Caco-2 (cell line): ENCODE measurements at regions of chr12 and their contacts with region 1.

Region 1: GRCh38 chr12:127677537-127678131 is 589.3 kb upstream of the TMEM132C start:
- DNase-seq: peak; percentile 65 to 67
- H3K4me3 ChIP-seq: no peak overlapping the region
- H3K4me3 Mint-ChIP-seq: no peak overlapping the region
- H3K27ac Mint-ChIP-seq: no peak overlapping the region
- H3K4me1 ChIP-seq: no peaks in the 10 kb centered on the region
- H3K4me1 Mint-ChIP-seq: no peaks in the 10 kb centered on the region
- H3K27me3 ChIP-seq: no peaks in the 10 kb centered on the region
- H3K27me3 Mint-ChIP-seq: no peaks in the 10 kb centered on the region
- CTCF ChIP-seq: peak; percentile 53 to 70

Region 2: DNA sequence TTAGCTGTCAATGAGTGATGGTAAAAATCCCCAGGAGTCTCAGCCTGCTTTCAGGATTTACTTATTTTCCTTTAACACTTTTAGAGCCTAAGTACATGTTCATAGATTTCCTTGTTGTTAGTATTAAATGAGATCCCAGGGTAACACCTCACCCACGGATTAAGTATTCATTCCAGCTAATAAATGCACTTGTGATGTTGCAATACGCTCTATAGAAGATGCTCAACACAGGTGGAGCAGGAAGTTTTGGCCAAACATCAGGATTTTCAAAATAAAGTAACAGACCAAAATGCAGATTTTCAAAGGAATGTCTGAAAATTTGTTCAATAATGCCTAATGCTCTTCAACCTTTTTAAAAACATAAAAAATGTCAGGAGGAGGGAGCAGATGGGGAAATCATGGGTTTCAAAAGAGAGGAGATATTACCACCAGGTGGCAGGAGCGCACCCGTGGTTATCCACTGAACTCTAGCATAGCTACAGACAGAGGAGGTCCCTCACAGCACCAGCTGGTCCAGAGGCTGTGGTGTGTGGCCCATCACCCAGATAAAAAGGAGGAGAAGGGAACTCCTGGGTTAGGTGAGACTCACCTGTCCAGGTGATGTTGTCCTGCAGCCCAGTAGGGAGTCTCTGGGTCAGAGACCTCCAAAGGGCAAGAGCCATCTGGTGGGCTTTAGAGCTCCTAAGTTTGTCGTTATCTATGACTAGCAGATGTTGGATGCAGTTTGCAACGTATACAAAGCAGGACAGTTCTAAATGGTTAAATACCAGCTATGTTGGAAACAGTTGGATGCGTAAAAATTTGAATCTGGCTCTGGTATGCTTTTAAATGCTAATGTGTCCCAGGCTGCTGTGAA is 569.0 kb before region 1 on chr12:
- CTCF ChIA-PET with region 1: interaction called, 13 read pairs
- POLR2A ChIA-PET with region 1: no interaction called
- intact Hi-C with region 1: loop called (anchors 5 kb)
- DNase-seq: peak; percentile 56 to 65
- H3K4me3 ChIP-seq: no peak overlapping the region
- H3K4me3 Mint-ChIP-seq: no peak overlapping the region
- H3K27ac Mint-ChIP-seq: no peak overlapping the region
- H3K4me1 ChIP-seq: no peaks in the 10 kb centered on the region
- H3K4me1 Mint-ChIP-seq: no peaks in the 10 kb centered on the region
- H3K27me3 ChIP-seq: no peaks in the 10 kb centered on the region
- H3K27me3 Mint-ChIP-seq: no peaks in the 10 kb centered on the region
- CTCF ChIP-seq: peak; percentile 44 to 48

Region 3: DNA sequence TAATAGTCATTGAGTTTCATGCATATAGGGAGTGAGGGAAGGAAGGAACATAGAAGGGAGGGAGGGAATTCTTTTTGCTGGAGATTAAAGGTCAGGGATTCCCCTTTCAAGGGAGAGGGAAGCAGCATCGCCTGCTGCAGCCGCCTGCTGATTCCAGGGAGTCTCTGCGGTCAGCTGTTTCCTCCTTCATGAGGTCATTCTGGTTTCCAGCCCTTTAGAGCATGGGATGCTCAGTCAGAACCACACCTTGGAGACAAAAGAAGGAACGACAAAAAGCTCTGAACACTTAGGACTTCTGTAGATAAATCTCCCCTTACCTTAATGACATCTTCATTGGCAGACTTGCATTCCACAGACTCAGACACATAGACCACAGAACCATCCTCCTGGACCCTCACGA is 333.7 kb before region 1 on chr12:
- CTCF ChIA-PET with region 1: no interaction called
- POLR2A ChIA-PET with region 1: no interaction called
- intact Hi-C with region 1: no loop called
- DNase-seq: no peak
- H3K4me3 ChIP-seq: no peak overlapping the region
- H3K4me3 Mint-ChIP-seq: no peak overlapping the region
- H3K27ac Mint-ChIP-seq: no peak overlapping the region
- H3K4me1 ChIP-seq: no peaks in the 10 kb centered on the region
- H3K4me1 Mint-ChIP-seq: no peaks in the 10 kb centered on the region
- H3K27me3 ChIP-seq: no peaks in the 10 kb centered on the region
- H3K27me3 Mint-ChIP-seq: no peaks in the 10 kb centered on the region
- CTCF ChIP-seq: no peak

Region 4: GRCh38 chr12:127381048-127381668 is 296.5 kb before region 1 on chr12:
- CTCF ChIA-PET with region 1: interaction called, 4 read pairs
- POLR2A ChIA-PET with region 1: no interaction called
- intact Hi-C with region 1: loop called (anchors 5 kb)
- DNase-seq: peak; percentile 51 to 75
- H3K4me3 ChIP-seq: no peak overlapping the region
- H3K4me3 Mint-ChIP-seq: peak overlapping the region; percentile 33
- H3K27ac Mint-ChIP-seq: no peak overlapping the region
- H3K4me1 ChIP-seq: no peaks in the 10 kb centered on the region
- H3K4me1 Mint-ChIP-seq: no peaks in the 10 kb centered on the region
- H3K27me3 ChIP-seq: no peaks in the 10 kb centered on the region
- H3K27me3 Mint-ChIP-seq: no peaks in the 10 kb centered on the region
- CTCF ChIP-seq: peak; percentile 55 to 82

Region 5: DNA sequence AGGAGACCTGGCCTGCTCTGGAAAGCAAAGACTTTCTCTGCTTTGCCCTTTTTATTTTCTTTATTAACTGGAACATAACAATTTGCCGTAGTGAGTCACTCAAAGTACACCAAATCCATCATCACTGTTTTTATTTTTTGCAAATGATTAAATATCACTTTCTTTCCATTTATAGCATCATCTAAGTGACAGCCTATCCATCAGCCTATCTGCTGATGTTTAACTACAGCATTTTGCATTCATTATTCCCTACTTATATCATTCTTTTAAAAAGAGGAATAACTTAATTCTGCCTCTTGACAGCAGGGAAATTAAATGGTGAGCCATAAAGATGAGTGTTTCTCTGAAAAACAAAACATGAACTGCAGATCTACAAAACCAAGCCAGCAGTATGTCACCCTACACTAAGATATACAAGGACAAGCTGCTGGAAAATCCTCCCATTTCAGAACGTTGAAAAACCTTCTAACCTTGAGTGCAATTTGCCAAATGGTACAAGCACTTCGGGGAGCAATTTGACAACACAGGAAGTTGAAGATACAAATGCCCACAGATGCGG is 232.0 kb before region 1 on chr12:
- CTCF ChIA-PET with region 1: no interaction called
- POLR2A ChIA-PET with region 1: no interaction called
- intact Hi-C with region 1: loop called (anchors 10 kb)
- DNase-seq: no peak
- H3K4me3 ChIP-seq: no peak overlapping the region
- H3K4me3 Mint-ChIP-seq: no peak overlapping the region
- H3K27ac Mint-ChIP-seq: no peak overlapping the region
- H3K4me1 ChIP-seq: no peaks in the 10 kb centered on the region
- H3K4me1 Mint-ChIP-seq: no peaks in the 10 kb centered on the region
- H3K27me3 ChIP-seq: no peaks in the 10 kb centered on the region
- H3K27me3 Mint-ChIP-seq: no peaks in the 10 kb centered on the region
- CTCF ChIP-seq: no peak

Region 6: GRCh38 chr12:127489061-127489460 is 188.6 kb before region 1 on chr12:
- CTCF ChIA-PET with region 1: no interaction called
- POLR2A ChIA-PET with region 1: no interaction called
- intact Hi-C with region 1: loop called (anchors 1 kb)
- DNase-seq: peak; percentile 60 to 70
- H3K4me3 ChIP-seq: no peak overlapping the region
- H3K4me3 Mint-ChIP-seq: peak overlapping the region; percentile 55
- H3K27ac Mint-ChIP-seq: peak overlapping the region; percentile 69
- H3K4me1 ChIP-seq: peaks cover 10% of the 10 kb centered on the region
- H3K4me1 Mint-ChIP-seq: no peaks in the 10 kb centered on the region
- H3K27me3 ChIP-seq: no peaks in the 10 kb centered on the region
- H3K27me3 Mint-ChIP-seq: no peaks in the 10 kb centered on the region
- CTCF ChIP-seq: no peak

Region 7: GRCh38 chr12:127559349-127560040 is 118.1 kb before region 1 on chr12:
- CTCF ChIA-PET with region 1: no interaction called
- POLR2A ChIA-PET with region 1: no interaction called
- intact Hi-C with region 1: loop called (anchors 10 kb)
- DNase-seq: no peak
- H3K4me3 ChIP-seq: no peak overlapping the region
- H3K4me3 Mint-ChIP-seq: no peak overlapping the region
- H3K27ac Mint-ChIP-seq: no peak overlapping the region
- H3K4me1 ChIP-seq: no peaks in the 10 kb centered on the region
- H3K4me1 Mint-ChIP-seq: peaks cover 12% of the 10 kb centered on the region
- H3K27me3 ChIP-seq: no peaks in the 10 kb centered on the region
- H3K27me3 Mint-ChIP-seq: no peaks in the 10 kb centered on the region
- CTCF ChIP-seq: no peak

Region 8: DNA sequence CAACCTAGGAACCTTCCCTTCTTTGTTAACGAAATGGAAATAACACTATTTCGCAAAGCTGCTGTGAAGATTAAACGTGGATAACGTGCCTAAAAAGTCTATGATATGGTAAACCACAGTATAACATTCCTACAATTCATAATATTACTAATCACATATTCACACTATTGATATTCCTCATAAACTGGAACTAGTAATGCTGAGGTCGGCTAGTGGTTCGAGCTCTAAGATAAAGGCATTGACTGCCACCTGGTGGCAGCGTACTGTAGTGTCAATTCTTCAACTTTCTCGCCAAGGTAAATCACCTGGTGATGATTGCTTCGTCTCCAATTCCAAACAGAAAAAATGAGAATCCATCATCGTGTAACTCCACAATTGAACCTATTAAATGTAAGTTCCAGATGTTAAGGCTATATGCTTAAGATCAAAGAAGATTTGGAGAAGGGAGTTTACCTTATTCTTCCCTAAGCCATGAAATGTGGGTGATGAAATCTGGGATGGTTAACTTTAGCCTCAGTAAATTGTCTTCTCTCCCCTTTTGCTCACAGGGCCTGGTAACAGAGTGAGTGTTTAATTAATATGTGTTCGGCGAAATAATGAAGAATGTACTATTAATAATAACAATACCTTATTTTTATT is 391.8 kb after region 1 on chr12:
- CTCF ChIA-PET with region 1: no interaction called
- POLR2A ChIA-PET with region 1: no interaction called
- intact Hi-C with region 1: loop called (anchors 2 kb)
- DNase-seq: peak in 1 of 2 experiments; percentile 36
- H3K4me3 ChIP-seq: no peak overlapping the region
- H3K4me3 Mint-ChIP-seq: no peak overlapping the region
- H3K27ac Mint-ChIP-seq: no peak overlapping the region
- H3K4me1 ChIP-seq: no peaks in the 10 kb centered on the region
- H3K4me1 Mint-ChIP-seq: no peaks in the 10 kb centered on the region
- H3K27me3 ChIP-seq: no peaks in the 10 kb centered on the region
- H3K27me3 Mint-ChIP-seq: no peaks in the 10 kb centered on the region
- CTCF ChIP-seq: peak; percentile 59 to 62